ENCODE measurements at regions of chr21 and their contacts with region 1.

Region 1: DNA sequence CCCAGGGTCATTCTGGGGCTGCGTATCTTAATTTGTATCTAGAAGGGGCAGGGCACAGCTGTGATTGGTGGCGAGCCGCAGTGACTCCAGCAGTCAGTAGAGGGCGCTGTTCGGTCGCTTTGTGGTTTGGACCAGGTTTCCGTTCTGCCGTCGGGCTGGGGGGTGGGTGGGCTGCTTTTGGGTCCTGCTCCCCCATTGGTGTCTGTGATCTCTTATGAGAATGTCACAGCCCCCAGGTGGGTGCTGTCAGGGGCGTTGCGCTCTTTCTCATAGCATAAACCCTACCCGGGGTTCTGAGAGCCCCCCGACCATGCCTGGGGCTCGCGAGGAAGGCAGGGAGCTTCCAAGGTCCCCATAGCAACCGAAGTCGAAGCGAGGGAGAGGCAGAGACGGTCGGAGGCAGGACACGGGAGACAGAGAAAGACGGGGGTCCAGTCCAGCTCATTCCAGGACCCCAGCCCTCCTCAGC is 5.4 kb downstream of the TFF3 start:
- ATAC-seq: peak; percentile 54 to 84 (median 76)
- H3K4me3 ChIP-seq: peak overlapping the region; percentile 10 to 29 (median 24)
- H3K27ac ChIP-seq: no peak overlapping the region
- H3K4me1 ChIP-seq: peaks cover 4 to 21% of the 10 kb centered on the region in 2 donors

Region 2: GRCh38 chr21:42424914-42425541 is 115.2 kb after region 1 on chr21:
- in situ Hi-C with region 1: loop called in 1 of 9 experiments (anchors 25 kb)
- ATAC-seq: no peak
- H3K4me3 ChIP-seq: no peak overlapping the region
- H3K27ac ChIP-seq: no peak overlapping the region
- H3K4me1 ChIP-seq: peaks cover 0 to 7% of the 10 kb centered on the region in 2 donors

Region 3: GRCh38 chr21:42524349-42525151 is 214.8 kb after region 1 on chr21:
- in situ Hi-C with region 1: loop called in 2 of 9 experiments (anchors 25 kb)
- ATAC-seq: peak; percentile 73 to 93 (median 88)
- H3K4me3 ChIP-seq: peak overlapping the region; percentile 8 to 39 (median 23)
- H3K27ac ChIP-seq: peak overlapping the region; percentile 79 to 85
- H3K4me1 ChIP-seq: peaks cover 36 to 42% of the 10 kb centered on the region in 2 donors